GM12878 (cell line): ENCODE measurements at regions of chr14 and their contacts with region 1.

Region 1: GRCh38 chr14:72893636-72894321 is at the start of gene DPF3:
- DNase-seq: peak; percentile 75
- ATAC-seq: peak; percentile 99
- H3K4me3 ChIP-seq: peak within 1 kb of the TSS; percentile 98
- H3K27ac ChIP-seq: no peak within 1 kb of the TSS
- H3K4me1 ChIP-seq: peaks cover 5% of the 10 kb centered on the region; the same call in 1 of the 2 replicates
- H3K27me3 ChIP-seq: no peaks in the 10 kb centered on the region
- CTCF ChIP-seq: no peak
- EP300 ChIP-seq: no peak
- POLR2A ChIP-seq: no peak
- RAD21 ChIP-seq: 0 out of 2 replicates have a peak, but pooled peaks have one; percentile 3
- polyA plus RNA-seq, gene DPF3: 0.69 to 0.87 TPM

Region 2: GRCh38 chr14:72714094-72714493 is 179.7 kb before region 1 on chr14:
- CTCF ChIA-PET with region 1: interaction called, 3 read pairs
- POLR2A ChIA-PET with region 1: interaction called, 3 read pairs
- RAD21 ChIA-PET with region 1: interaction called, 10 read pairs
- SMC1A ChIA-PET with region 1: interaction called, 6 read pairs
- in situ Hi-C with region 1: no loop called
- intact Hi-C with region 1: no loop called
- DNase-seq: peak; percentile 31
- ATAC-seq: peak; percentile 78
- H3K4me3 ChIP-seq: no peak overlapping the region
- H3K27ac ChIP-seq: no peak overlapping the region
- H3K4me1 ChIP-seq: peaks cover 24% of the 10 kb centered on the region
- H3K27me3 ChIP-seq: no peaks in the 10 kb centered on the region
- CTCF ChIP-seq: no peak
- EP300 ChIP-seq: peak; percentile 60 to 68; a peak in 3 of 4 replicates
- POLR2A ChIP-seq: no peak
- RAD21 ChIP-seq: no peak

Region 3: DNA sequence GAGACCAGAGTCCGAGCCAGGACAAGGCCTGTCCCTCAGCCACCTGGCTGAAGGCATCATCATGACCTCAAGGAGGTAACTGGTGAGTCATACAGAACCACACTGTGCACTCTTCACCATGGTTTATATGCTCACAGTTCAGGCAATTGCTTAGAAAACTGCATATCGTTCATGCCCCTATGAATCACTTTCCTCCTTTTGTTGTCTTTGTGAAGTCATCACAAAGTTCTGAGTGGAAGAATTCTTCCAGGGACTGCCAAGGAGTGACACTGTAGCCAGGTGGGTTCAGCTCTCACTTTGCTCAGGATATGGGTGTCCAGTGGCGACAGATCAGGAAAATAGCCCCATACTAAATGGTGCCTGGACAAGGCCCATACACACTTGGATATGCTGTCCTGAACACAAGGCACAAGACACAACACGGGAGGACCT is 92.4 kb before region 1 on chr14:
- CTCF ChIA-PET with region 1: no interaction called
- POLR2A ChIA-PET with region 1: no interaction called
- RAD21 ChIA-PET with region 1: no interaction called
- SMC1A ChIA-PET with region 1: no interaction called
- in situ Hi-C with region 1: no loop called
- intact Hi-C with region 1: no loop called
- DNase-seq: no peak
- ATAC-seq: peak; percentile 65
- H3K4me3 ChIP-seq: no peak overlapping the region
- H3K27ac ChIP-seq: no peak overlapping the region
- H3K4me1 ChIP-seq: no peaks in the 10 kb centered on the region
- H3K27me3 ChIP-seq: no peaks in the 10 kb centered on the region
- CTCF ChIP-seq: no peak
- EP300 ChIP-seq: no peak
- POLR2A ChIP-seq: no peak
- RAD21 ChIP-seq: no peak

Region 4: DNA sequence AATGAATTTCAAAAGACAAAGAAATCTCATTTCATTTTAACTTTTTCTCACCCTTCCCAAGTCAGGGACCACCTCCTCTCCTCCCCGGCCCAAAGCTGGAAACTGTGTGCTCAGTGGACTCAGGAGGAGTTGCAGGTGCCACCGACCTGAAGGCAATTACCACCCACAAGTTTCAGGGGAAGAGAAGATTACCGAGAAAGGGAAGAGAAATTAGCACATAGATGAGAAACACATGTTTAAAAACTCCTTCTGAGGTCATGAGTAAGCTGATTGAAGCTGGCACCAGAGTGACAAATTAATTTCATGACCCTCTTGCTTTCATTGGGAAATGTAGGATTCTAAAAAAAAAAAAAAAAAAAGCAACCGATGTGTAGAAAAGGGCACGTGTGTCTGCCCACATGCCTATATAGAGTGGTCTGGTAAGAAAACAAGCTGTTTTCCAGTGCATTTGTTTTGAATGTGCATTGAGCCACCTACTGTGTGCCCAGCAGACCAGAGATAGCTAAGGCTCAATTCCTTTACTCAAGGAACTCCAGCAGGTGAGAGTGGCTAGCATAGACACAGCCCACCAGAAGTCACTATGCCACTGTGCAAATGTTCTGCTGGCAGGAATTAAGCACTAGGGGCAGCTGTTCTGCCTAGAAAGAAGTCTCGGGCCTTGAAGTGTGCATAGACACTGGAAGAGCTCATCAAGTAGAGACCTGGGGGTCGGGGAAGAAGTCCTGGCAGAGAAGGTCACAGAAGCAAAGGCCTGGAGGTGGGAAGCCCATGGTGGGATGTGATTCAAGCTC is 30.4 kb before region 1 on chr14:
- CTCF ChIA-PET with region 1: interaction called, 10 read pairs
- POLR2A ChIA-PET with region 1: interaction called, 3 read pairs
- RAD21 ChIA-PET with region 1: interaction called, 13 read pairs
- SMC1A ChIA-PET with region 1: interaction called, 9 read pairs
- in situ Hi-C with region 1: no loop called
- intact Hi-C with region 1: no loop called
- DNase-seq: peak; percentile 68
- ATAC-seq: peak; percentile 94
- H3K4me3 ChIP-seq: no peak overlapping the region
- H3K27ac ChIP-seq: no peak overlapping the region
- H3K4me1 ChIP-seq: peaks cover 8% of the 10 kb centered on the region
- H3K27me3 ChIP-seq: no peaks in the 10 kb centered on the region
- CTCF ChIP-seq: peak; percentile 6 to 19 (median 10); a peak in 2 of 6 replicates
- EP300 ChIP-seq: no peak
- POLR2A ChIP-seq: no peak
- RAD21 ChIP-seq: peak; percentile 26; the same call in 1 of the 2 replicates

Region 5: DNA sequence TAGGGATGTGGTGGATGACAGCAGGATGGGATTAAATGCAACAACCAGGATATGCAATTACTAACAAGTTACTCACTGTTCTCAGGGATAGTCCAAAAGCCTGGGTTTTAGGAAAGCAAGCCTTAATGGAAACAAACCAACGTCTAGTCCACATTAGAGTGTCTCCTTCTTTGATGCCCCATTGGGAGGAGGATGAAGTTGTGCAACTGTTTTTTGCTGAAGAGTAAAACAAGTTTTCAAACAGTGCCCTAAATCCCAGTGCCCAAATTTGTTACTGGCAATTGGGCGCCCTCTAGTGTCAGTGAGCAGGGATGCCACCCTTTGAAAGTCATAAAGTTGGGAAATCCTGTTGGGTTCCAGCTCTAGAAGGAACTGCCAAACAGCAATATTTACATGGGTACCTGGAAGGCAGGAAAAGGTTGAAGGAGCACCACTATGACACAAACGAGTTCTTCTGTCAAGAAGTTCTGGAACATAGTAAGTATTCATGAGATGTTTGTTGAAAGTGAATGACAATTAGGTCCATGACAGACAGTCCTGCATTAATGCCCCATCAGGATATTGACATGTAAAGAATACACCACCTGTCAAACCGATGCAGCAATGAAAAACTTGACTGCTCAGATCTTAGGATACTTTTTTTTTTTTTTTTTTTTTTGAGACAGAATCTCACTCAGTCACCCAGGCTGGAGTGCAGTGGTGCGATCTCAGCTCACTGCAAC is 11.2 kb after region 1 on chr14:
- CTCF ChIA-PET with region 1: interaction called, 40 read pairs
- POLR2A ChIA-PET with region 1: no interaction called
- RAD21 ChIA-PET with region 1: interaction called, 20 read pairs
- SMC1A ChIA-PET with region 1: interaction called, 25 read pairs
- in situ Hi-C with region 1: no loop called
- intact Hi-C with region 1: no loop called
- DNase-seq: no peak
- ATAC-seq: peak; percentile 83
- H3K4me3 ChIP-seq: no peak overlapping the region
- H3K27ac ChIP-seq: no peak overlapping the region
- H3K4me1 ChIP-seq: peaks cover 7% of the 10 kb centered on the region; the same call in 1 of the 2 replicates
- H3K27me3 ChIP-seq: no peaks in the 10 kb centered on the region
- CTCF ChIP-seq: peak; percentile 88 to 96 (median 95)
- EP300 ChIP-seq: no peak
- POLR2A ChIP-seq: no peak
- RAD21 ChIP-seq: peak; percentile 99

Region 6: GRCh38 chr14:72942782-72943333 is 49.1 kb after region 1 on chr14:
- CTCF ChIA-PET with region 1: no interaction called
- POLR2A ChIA-PET with region 1: no interaction called
- RAD21 ChIA-PET with region 1: no interaction called
- SMC1A ChIA-PET with region 1: no interaction called
- in situ Hi-C with region 1: no loop called
- intact Hi-C with region 1: no loop called
- DNase-seq: no peak
- ATAC-seq: no peak
- H3K4me3 ChIP-seq: no peak overlapping the region
- H3K27ac ChIP-seq: no peak overlapping the region
- H3K4me1 ChIP-seq: no peaks in the 10 kb centered on the region
- H3K27me3 ChIP-seq: no peaks in the 10 kb centered on the region
- CTCF ChIP-seq: peak in 1 of 3 experiments; percentile 5; a peak in 1 of 6 replicates
- EP300 ChIP-seq: no peak
- POLR2A ChIP-seq: no peak
- RAD21 ChIP-seq: 0 out of 2 replicates have a peak, but pooled peaks have one; percentile 9

Region 7: DNA sequence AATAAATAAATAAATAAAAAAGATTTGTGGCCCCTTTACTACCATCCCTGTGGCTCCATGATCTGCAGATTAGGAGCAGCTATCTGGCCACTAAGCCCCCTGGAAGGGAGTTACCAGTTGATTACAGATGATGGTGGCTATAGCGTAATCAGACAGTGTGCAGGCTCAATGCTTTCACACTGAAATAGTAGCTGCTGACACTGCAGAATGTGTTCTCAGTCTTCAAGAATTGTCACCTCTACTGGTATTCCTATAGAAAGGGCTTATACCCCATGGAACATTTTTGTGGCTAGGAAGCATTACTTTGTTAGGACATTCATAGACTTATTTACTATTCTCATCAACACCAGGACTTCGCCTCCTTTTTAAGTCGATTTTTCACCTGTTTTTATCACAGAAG is 63.4 kb after region 1 on chr14:
- CTCF ChIA-PET with region 1: no interaction called
- POLR2A ChIA-PET with region 1: no interaction called
- RAD21 ChIA-PET with region 1: no interaction called
- SMC1A ChIA-PET with region 1: no interaction called
- in situ Hi-C with region 1: no loop called
- intact Hi-C with region 1: no loop called
- DNase-seq: no peak
- ATAC-seq: no peak
- H3K4me3 ChIP-seq: no peak overlapping the region
- H3K27ac ChIP-seq: no peak overlapping the region
- H3K4me1 ChIP-seq: no peaks in the 10 kb centered on the region
- H3K27me3 ChIP-seq: no peaks in the 10 kb centered on the region
- CTCF ChIP-seq: no peak
- EP300 ChIP-seq: no peak
- POLR2A ChIP-seq: no peak
- RAD21 ChIP-seq: no peak